ENCODE measurements at regions of chr7 and their contacts with region 1.

Region 1: GRCh38 chr7:25851332-25852210 is 300.4 kb upstream of the NFE2L3 start:
- DNase-seq: peak in 13 of 14 experiments; percentile 29 to 76 (median 45)
- ATAC-seq: peak; percentile 63
- H3K4me3 ChIP-seq: no peak overlapping the region
- H3K4me3 Mint-ChIP-seq: peak overlapping the region; percentile 77
- H3K27ac ChIP-seq: no peak overlapping the region
- H3K27ac Mint-ChIP-seq: peak overlapping the region; percentile 56
- H3K4me1 ChIP-seq: peaks cover 32% of the 10 kb centered on the region
- H3K4me1 Mint-ChIP-seq: peaks cover 29% of the 10 kb centered on the region
- H3K27me3 ChIP-seq: peaks cover 61 to 67% of the 10 kb centered on the region in 2 experiments
- H3K27me3 Mint-ChIP-seq: peaks cover 46% of the 10 kb centered on the region
- CTCF ChIP-seq: peak; percentile 64

Region 2: DNA sequence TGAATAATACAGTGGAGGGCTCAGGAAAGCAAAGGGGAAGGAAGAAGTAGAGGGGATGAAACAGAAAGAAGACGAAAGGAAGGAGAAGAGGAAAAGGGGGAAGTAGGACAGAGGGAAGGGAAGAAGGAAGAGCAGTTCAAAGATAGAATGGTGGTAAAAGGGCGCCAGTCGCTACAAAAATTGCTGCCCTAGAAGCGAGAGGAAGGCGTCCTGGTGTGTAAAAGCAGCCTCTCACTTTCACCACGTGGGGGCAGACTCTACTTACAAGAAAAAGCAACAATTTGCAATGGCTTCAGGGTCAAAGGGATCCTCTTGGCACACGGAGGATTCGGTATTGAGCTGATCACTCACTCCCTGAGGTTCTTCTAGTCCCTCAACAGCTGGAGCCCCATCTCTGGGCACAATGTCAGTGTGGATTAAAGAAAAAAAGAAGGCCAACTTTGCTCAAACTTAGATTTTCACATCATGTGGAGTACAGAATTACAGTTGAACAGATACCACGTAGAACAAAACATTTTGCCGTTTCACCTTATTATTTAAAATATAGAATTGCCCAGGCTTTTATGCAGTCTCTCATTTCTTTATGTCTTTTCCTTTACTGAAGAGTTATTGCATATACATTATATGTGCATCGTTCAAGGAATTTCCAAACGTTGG is 591.9 kb before region 1 on chr7:
- CTCF ChIA-PET with region 1: no interaction called
- POLR2A ChIA-PET with region 1: interaction called, 3 read pairs
- intact Hi-C with region 1: loop called (anchors 1 to 2 kb)
- DNase-seq: peak; percentile 35 to 86 (median 57)
- ATAC-seq: peak; percentile 71
- H3K4me3 ChIP-seq: no peak overlapping the region
- H3K4me3 Mint-ChIP-seq: peak overlapping the region; percentile 76
- H3K27ac ChIP-seq: no peak overlapping the region
- H3K27ac Mint-ChIP-seq: peak overlapping the region; percentile 60
- H3K4me1 ChIP-seq: peaks cover 9% of the 10 kb centered on the region
- H3K4me1 Mint-ChIP-seq: peaks cover 33% of the 10 kb centered on the region
- H3K27me3 ChIP-seq: no peaks in the 10 kb centered on the region
- H3K27me3 Mint-ChIP-seq: no peaks in the 10 kb centered on the region
- CTCF ChIP-seq: peak; percentile 82

Region 3: GRCh38 chr7:25389489-25390106 is 462.0 kb before region 1 on chr7:
- CTCF ChIA-PET with region 1: no interaction called
- POLR2A ChIA-PET with region 1: no interaction called
- intact Hi-C with region 1: loop called (anchors 2 kb)
- DNase-seq: peak in 4 of 14 experiments; percentile 13 to 70 (median 44)
- ATAC-seq: peak; percentile 29
- H3K4me3 ChIP-seq: no peak overlapping the region
- H3K4me3 Mint-ChIP-seq: no peak overlapping the region
- H3K27ac ChIP-seq: no peak overlapping the region
- H3K27ac Mint-ChIP-seq: no peak overlapping the region
- H3K4me1 ChIP-seq: no peaks in the 10 kb centered on the region
- H3K4me1 Mint-ChIP-seq: no peaks in the 10 kb centered on the region
- H3K27me3 ChIP-seq: no peaks in the 10 kb centered on the region
- H3K27me3 Mint-ChIP-seq: peaks cover 4% of the 10 kb centered on the region
- CTCF ChIP-seq: peak; percentile 44

Region 4: DNA sequence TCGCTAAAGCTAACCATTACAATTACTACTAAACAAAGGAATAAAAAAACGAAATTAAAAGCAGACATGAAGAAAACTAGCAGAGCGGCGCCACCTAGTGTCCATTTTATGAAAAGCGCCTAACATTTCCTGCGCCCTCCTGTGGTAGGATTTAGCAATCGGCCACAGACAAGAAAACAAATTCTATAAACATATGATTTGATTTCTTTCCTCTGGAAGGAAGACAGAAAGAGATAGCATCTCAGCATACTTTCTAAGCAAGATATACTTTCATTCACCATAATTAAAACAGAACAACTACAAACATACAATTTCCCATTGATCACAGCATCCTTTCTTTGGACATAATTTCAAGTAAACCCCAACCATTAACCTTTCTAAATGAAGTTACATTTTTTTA is 285.6 kb before region 1 on chr7:
- CTCF ChIA-PET with region 1: no interaction called
- POLR2A ChIA-PET with region 1: no interaction called
- intact Hi-C with region 1: loop called (anchors 5 to 10 kb)
- DNase-seq: peak; percentile 41 to 86 (median 59)
- ATAC-seq: peak; percentile 61
- H3K4me3 ChIP-seq: no peak overlapping the region
- H3K4me3 Mint-ChIP-seq: no peak overlapping the region
- H3K27ac ChIP-seq: no peak overlapping the region
- H3K27ac Mint-ChIP-seq: no peak overlapping the region
- H3K4me1 ChIP-seq: no peaks in the 10 kb centered on the region
- H3K4me1 Mint-ChIP-seq: peaks cover 7% of the 10 kb centered on the region
- H3K27me3 ChIP-seq: no peaks in the 10 kb centered on the region
- H3K27me3 Mint-ChIP-seq: no peaks in the 10 kb centered on the region
- CTCF ChIP-seq: peak; percentile 100

Region 5: GRCh38 chr7:25656581-25657026 is 195.0 kb before region 1 on chr7:
- CTCF ChIA-PET with region 1: no interaction called
- POLR2A ChIA-PET with region 1: no interaction called
- intact Hi-C with region 1: no loop called
- DNase-seq: no peak
- ATAC-seq: no peak
- H3K4me3 ChIP-seq: no peak overlapping the region
- H3K4me3 Mint-ChIP-seq: no peak overlapping the region
- H3K27ac ChIP-seq: no peak overlapping the region
- H3K27ac Mint-ChIP-seq: no peak overlapping the region
- H3K4me1 ChIP-seq: peaks cover 6% of the 10 kb centered on the region
- H3K4me1 Mint-ChIP-seq: peaks cover 28% of the 10 kb centered on the region
- H3K27me3 ChIP-seq: no peaks in the 10 kb centered on the region
- H3K27me3 Mint-ChIP-seq: no peaks in the 10 kb centered on the region
- CTCF ChIP-seq: no peak

Region 6: DNA sequence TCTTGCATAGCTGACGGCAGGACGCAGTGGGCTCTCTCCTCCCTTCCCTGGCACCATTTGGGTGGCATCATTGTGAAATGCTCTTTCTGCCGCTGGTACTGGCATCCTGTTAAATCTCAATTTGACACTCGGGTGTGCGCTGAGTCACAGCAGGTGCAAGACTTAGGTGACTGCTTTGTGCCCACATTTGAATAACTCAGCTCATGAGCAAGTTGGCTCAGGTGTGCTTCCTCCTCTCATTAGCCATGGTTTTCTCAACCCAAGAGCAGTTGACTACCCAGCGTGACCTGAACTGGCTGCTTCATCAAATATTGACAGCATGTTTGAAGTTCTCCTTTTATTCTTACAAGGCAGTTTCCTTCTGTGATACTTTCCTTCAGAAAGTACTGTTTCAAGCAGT is 275.8 kb after region 1 on chr7:
- CTCF ChIA-PET with region 1: no interaction called
- POLR2A ChIA-PET with region 1: no interaction called
- intact Hi-C with region 1: no loop called
- DNase-seq: no peak
- ATAC-seq: no peak
- H3K4me3 ChIP-seq: no peak overlapping the region
- H3K4me3 Mint-ChIP-seq: no peak overlapping the region
- H3K27ac ChIP-seq: no peak overlapping the region
- H3K27ac Mint-ChIP-seq: no peak overlapping the region
- H3K4me1 ChIP-seq: no peaks in the 10 kb centered on the region
- H3K4me1 Mint-ChIP-seq: no peaks in the 10 kb centered on the region
- H3K27me3 ChIP-seq: no peaks in the 10 kb centered on the region
- H3K27me3 Mint-ChIP-seq: peaks cover 4% of the 10 kb centered on the region
- CTCF ChIP-seq: no peak

Region 7: GRCh38 chr7:27095897-27096767 is 1244.6 kb after region 1 on chr7 and contains the start of gene HOXA1:
- CTCF ChIA-PET with region 1: no interaction called
- POLR2A ChIA-PET with region 1: no interaction called
- intact Hi-C with region 1: loop called in 1 of 2 experiments (anchors 10 kb)
- DNase-seq: peak; percentile 24 to 92 (median 60)
- ATAC-seq: peak; percentile 85
- H3K4me3 ChIP-seq: peak within 1 kb of the TSS; percentile 77
- H3K4me3 Mint-ChIP-seq: peak within 1 kb of the TSS; percentile 90
- H3K27ac ChIP-seq: peak within 1 kb of the TSS in 1 of 2 donors; percentile 17
- H3K27ac Mint-ChIP-seq: no peak within 1 kb of the TSS
- H3K4me1 ChIP-seq: peaks cover 43% of the 10 kb centered on the region
- H3K4me1 Mint-ChIP-seq: peaks cover 22% of the 10 kb centered on the region
- H3K27me3 ChIP-seq: peaks cover 63 to 79% of the 10 kb centered on the region in 2 experiments
- H3K27me3 Mint-ChIP-seq: peaks cover 91% of the 10 kb centered on the region
- CTCF ChIP-seq: no peak
- total RNA-seq, gene HOXA1: 0.14 to 0.22 TPM